ENCODE measurements at regions of chr5 and their contacts with region 1.

Region 1: DNA sequence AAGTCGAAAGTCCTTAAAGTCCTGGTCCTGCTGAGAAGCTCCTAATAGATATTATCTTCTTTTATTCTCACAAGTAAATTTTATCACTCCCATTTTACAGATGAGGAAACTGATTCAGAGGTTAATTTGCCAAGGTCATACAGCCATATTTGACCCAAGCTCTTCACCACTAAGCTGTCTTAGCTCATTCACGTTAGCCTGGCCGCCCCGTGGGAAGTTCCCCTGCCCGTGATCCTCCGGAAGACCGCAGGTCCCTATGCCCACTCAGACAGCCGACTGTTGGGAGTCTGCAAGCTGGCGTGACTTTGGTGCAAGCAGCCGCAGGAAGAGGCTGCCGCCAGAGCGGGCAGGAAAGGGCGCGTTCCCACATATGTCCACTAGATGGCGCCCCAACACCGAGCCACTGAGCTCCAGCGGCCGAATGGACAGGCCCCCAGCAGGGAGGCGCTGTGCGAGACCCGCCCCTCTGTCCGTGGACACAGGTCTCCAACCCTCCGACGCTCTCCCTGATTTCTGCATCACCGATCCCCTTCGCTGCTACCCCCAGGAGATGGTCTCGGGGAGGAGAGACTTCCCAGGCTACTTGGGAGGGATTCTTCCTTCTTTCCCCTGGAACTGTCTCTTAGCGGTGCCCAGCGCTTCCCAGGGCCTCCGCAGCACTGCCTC is 10.0 kb upstream of the ARAP3 start:
- DNase-seq: peak; percentile 84 to 91
- ATAC-seq: peak; percentile 95 to 99 (median 98)
- H3K4me3 ChIP-seq: peak overlapping the region; percentile 53
- H3K27ac ChIP-seq: no peak overlapping the region
- H3K4me1 ChIP-seq: peaks cover 4% of the 10 kb centered on the region
- H3K27me3 ChIP-seq: peaks cover 0 to 6% (median 2%) of the 10 kb centered on the region in 3 donors
- CTCF ChIP-seq: peak; percentile 99

Region 2: GRCh38 chr5:141564216-141564692 is 127.7 kb before region 1 on chr5:
- intact Hi-C with region 1: no loop called
- DNase-seq: no peak
- ATAC-seq: peak; percentile 66 to 74 (median 68)
- H3K4me3 ChIP-seq: no peak overlapping the region
- H3K27ac ChIP-seq: peak overlapping the region; percentile 61
- H3K4me1 ChIP-seq: peaks cover 19% of the 10 kb centered on the region
- H3K27me3 ChIP-seq: no peaks in the 10 kb centered on the region
- CTCF ChIP-seq: peak; percentile 91

Region 3: GRCh38 chr5:141729387-141730006 is 37.5 kb after region 1 on chr5:
- intact Hi-C with region 1: no loop called
- DNase-seq: no peak
- ATAC-seq: no peak
- H3K4me3 ChIP-seq: no peak overlapping the region
- H3K27ac ChIP-seq: no peak overlapping the region
- H3K4me1 ChIP-seq: peaks cover 5% of the 10 kb centered on the region
- H3K27me3 ChIP-seq: no peaks in the 10 kb centered on the region
- CTCF ChIP-seq: no peak

Region 4: GRCh38 chr5:141929398-141930058 is 237.5 kb after region 1 on chr5:
- intact Hi-C with region 1: no loop called
- DNase-seq: no peak
- ATAC-seq: peak; percentile 80 to 92 (median 86)
- H3K4me3 ChIP-seq: no peak overlapping the region
- H3K27ac ChIP-seq: peak overlapping the region; percentile 57
- H3K4me1 ChIP-seq: peaks cover 12% of the 10 kb centered on the region
- H3K27me3 ChIP-seq: no peaks in the 10 kb centered on the region
- CTCF ChIP-seq: no peak

Region 5: GRCh38 chr5:141960449-141961202 is 268.6 kb after region 1 on chr5:
- intact Hi-C with region 1: loop called (anchors 1 to 2 kb)
- DNase-seq: peak; percentile 88 to 93
- ATAC-seq: peak; percentile 86 to 95 (median 87)
- H3K4me3 ChIP-seq: no peak overlapping the region
- H3K27ac ChIP-seq: no peak overlapping the region
- H3K4me1 ChIP-seq: peaks cover 5% of the 10 kb centered on the region
- H3K27me3 ChIP-seq: no peaks in the 10 kb centered on the region
- CTCF ChIP-seq: peak; percentile 89

Region 6: DNA sequence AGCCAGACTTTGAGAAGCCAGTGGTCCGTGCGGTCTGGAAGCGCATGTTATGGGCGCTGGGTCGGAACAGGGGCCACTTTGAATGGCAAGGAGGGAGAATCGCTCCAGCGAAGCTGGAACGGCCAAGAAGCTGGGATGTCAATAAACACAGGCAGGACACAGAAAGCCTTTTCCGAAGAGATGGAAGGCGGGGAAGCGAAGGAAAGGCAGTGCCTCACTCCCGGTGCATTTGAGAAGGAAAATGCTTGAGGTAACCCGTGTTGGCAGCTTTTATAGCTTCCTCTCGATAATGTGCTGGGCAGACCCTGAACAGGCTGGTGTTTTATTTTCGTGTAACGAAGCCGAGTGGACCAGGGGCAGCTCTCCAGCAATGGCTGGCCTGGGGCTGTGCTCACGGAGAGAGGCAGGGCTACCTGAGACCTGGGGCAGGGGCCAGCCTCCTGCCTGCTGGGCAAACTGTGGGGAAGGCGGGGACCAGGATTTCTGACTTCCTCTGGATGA is 717.0 kb after region 1 on chr5:
- intact Hi-C with region 1: no loop called
- DNase-seq: no peak
- ATAC-seq: no peak
- H3K4me3 ChIP-seq: no peak overlapping the region
- H3K27ac ChIP-seq: no peak overlapping the region
- H3K4me1 ChIP-seq: no peaks in the 10 kb centered on the region
- H3K27me3 ChIP-seq: no peaks in the 10 kb centered on the region
- CTCF ChIP-seq: no peak